ENCODE measurements at regions of chr3 and their contacts with region 1.

Region 1: GRCh38 chr3:185959609-185960517 is 22.0 kb upstream of the TRA2B start:
- DNase-seq: no peak

Region 2: GRCh38 chr3:184272269-184272668 is 1687.6 kb before region 1 on chr3:
- intact Hi-C with region 1: loop called in 1 of 2 experiments (anchors 5 kb)
- DNase-seq: no peak

Region 3: DNA sequence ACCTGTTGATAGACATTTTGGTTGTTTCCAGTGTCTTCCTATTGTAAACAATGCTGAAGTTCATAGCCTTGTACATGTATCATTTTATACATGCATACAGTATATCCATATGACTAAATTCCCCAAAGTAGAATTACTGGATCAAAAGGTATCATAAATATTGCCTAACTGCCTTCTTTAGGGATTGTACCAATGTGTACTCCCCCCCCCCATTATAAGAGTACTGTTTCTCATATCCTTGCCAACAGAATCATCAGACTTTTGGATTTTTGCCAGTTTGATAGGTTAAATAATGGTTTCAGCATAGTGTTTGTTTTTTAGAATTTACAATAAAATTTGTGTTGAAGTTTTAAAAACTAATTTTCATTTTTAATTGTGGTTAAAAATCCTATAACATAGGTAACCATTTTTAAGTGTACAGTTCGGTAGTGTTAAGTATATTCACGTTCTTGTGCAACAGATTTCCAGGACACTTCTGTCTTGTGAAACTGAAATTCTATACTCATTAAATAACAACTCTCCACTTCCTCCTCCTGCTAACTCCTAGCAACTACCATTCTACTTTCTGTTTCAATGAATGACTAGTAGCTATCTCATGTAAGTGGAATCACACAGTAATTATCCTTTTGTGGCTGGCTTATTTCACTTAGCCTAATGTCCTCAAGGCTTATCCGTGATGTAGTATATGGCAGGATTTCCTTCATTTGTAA is 627.7 kb before region 1 on chr3:
- intact Hi-C with region 1: loop called in 1 of 2 experiments (anchors 5 kb)
- DNase-seq: no peak

Region 4: DNA sequence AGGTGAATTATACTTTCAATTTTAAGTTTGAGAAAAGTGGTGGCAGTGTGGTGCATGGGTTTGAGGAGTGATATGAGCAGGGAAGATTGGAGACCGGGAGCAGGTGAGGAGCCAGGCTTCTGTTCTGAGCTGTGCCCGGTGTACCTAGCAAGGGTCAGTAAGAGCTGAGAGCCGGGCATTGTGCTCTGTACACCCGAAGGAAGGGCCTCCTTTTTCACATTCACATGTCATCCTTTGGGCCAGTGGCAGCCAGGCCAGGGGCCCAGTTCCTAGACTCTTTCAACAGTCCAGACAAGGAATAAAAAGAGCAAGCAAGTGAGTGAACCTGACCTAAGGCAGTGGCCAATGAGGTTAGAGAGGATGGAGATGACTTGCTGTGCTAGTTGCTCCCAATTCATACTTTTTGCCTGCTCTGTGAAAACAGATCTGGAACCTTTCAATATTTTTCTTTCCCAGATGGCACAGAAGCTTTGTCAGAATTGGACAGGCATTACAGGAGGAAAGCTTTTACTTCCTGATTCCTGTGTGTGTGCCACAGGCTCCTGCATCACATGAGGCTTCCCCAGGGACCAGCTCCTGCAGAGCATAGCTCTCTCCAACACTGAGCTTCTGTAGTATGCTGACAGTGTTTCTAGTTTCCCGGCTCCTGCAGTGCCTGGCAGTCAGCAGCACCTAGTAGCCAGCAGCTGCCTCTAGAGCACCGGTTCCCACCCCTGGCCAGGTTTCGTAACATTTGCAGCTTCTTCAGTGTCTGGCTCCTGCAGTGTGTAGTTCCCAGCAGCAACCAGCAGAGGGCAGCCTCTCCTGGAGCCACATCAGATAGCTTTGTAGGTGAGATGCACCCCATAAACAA is 16.7 kb before region 1 on chr3:
- intact Hi-C with region 1: no loop called
- DNase-seq: peak; percentile 94

Region 5: DNA sequence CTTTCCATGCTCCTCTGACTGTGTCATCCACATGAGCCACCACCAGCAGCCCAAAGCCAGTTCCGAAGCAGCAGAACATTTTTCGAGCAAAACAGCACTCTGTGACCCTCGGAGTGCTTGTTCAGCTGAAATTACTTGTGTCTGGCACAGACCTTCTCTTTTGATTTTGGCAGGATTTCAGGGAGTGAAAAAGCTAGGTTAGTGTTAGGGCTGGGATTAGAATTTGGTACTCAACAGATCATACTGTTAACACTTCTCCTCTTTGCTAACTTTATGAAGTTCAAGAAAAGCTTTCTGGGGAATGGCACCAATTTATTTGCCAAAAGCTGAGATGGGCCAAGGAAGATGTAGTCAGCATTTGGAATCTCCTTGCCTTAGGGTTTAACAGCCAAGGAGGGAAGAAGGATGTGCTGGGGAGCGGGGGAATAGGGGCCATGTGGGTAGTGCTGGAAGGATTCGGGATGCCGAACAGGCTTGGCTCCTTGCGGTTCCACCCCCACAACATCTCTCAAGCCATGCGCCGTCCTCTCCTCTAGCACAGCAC is 33.0 kb after region 1 on chr3:
- intact Hi-C with region 1: no loop called
- DNase-seq: no peak

Region 6: GRCh38 chr3:186067360-186068242 is 107.7 kb after region 1 on chr3:
- intact Hi-C with region 1: no loop called
- DNase-seq: no peak